ENCODE measurements at regions of chr18 and their contacts with region 1.

Region 1: DNA sequence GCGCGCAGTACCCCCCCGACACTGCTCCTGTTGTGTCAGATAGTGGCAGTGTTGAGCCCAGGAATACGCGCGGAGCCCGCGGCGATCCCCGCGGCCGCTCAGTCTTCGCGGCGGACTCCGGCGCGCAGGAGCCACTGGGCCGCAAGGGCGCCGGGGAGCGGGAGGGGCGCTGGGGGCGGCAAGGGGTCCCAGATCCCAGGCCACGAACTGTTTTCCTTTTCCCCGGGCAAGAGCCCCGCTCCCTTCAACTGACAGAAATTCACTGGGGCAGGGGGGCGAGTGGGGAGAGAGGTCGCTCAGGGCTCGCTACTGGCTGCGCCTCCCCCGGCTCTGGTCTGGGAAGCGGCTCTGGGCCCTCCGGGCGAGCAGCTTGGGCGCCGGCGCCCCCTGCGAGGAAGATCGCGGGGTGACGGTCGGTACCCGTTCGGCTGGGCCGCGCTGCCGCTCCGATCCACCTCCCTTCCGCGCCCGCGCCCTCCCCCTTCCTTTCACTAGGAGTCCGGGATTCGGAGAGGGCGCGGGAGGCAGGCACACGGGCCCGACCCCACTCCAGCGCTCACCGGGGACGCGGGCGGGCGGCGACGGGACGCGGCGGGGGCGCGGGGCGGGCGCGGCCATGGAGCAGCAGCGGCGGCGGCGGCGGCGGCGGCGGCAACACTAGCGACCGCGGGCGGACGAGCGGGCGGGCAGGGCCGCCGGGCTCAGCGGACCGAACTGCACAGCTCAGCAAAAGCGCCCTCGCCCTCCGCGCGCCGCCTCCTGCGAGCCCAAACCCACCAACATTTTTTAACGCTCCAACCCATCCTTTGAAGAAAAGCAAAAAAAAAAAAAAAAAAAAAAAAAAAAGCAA is 1.4 kb upstream of the SETBP1 start:
- DNase-seq: peak; percentile 84 to 87
- ATAC-seq: peak; percentile 75 to 79
- H3K4me3 ChIP-seq: peak overlapping the region; percentile 58 to 83 (median 79)
- H3K27ac ChIP-seq: peak overlapping the region; percentile 86 to 100 (median 96)
- H3K4me1 ChIP-seq: peaks cover 29 to 32% of the 10 kb centered on the region in 2 donors
- H3K27me3 ChIP-seq: no peaks in the 10 kb centered on the region
- CTCF ChIP-seq: peak; percentile 34 to 73 (median 70)
- POLR2A ChIP-seq: peak; percentile 89 to 91

Region 2: GRCh38 chr18:44601447-44601846 is 77.8 kb before region 1 on chr18:
- in situ Hi-C with region 1: no loop called
- intact Hi-C with region 1: no loop called
- DNase-seq: no peak
- ATAC-seq: no peak
- H3K4me3 ChIP-seq: no peak overlapping the region
- H3K27ac ChIP-seq: no peak overlapping the region
- H3K4me1 ChIP-seq: no peaks in the 10 kb centered on the region
- H3K27me3 ChIP-seq: no peaks in the 10 kb centered on the region
- CTCF ChIP-seq: no peak
- POLR2A ChIP-seq: no peak

Region 3: GRCh38 chr18:44733069-44733753 is 53.9 kb after region 1 on chr18:
- in situ Hi-C with region 1: no loop called
- intact Hi-C with region 1: loop called (anchors 2 kb)
- DNase-seq: peak in 1 of 2 donors; percentile 48
- ATAC-seq: peak; percentile 82 to 84
- H3K4me3 ChIP-seq: no peak overlapping the region
- H3K27ac ChIP-seq: peak overlapping the region; percentile 54 to 77 (median 72)
- H3K4me1 ChIP-seq: peaks cover 55 to 61% of the 10 kb centered on the region in 2 donors
- H3K27me3 ChIP-seq: no peaks in the 10 kb centered on the region
- CTCF ChIP-seq: no peak
- POLR2A ChIP-seq: peak; percentile 27 to 33

Region 4: DNA sequence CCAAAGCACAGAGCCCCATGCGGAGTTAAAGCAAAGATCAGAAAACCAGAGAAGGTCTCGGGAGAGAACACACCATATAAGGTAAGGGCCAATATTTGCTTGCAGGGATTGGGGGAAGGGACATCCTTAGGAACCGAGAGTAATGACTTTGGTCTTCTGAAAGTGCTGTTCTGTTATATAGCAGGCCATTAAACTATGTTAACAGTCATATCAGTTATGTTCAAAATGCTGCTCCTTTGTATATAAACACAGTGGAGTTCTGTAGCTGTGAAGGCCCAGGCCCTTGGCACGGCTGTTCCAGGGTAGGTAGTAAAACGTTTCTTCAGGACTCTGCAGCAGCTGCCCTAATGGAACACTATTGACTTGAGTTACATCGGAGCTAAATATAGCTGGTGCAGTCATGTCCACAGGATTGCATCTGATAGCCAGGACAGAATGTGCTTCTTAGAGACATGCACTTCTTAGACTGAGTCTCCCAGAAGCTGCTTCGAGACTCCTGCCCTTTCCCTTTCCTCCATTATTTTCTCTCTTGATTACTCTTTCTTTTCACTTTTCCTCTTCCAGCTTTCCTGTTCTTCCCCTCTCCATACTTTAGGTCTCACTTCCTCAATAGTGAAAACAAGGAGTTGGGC is 123.9 kb after region 1 on chr18:
- in situ Hi-C with region 1: loop called in 1 of 4 experiments (anchors 25 kb)
- intact Hi-C with region 1: loop called (anchors 2 kb)
- DNase-seq: peak; percentile 87 to 91
- ATAC-seq: peak; percentile 95 to 99
- H3K4me3 ChIP-seq: peak overlapping the region; percentile 15 to 27 (median 18)
- H3K27ac ChIP-seq: peak overlapping the region; percentile 92 to 98 (median 94)
- H3K4me1 ChIP-seq: peaks cover 73 to 86% of the 10 kb centered on the region in 2 donors
- H3K27me3 ChIP-seq: no peaks in the 10 kb centered on the region
- CTCF ChIP-seq: no peak
- POLR2A ChIP-seq: peak; percentile 74 to 86

Region 5: GRCh38 chr18:44895176-44895798 is 216.0 kb after region 1 on chr18:
- in situ Hi-C with region 1: loop called (anchors 5 to 10 kb)
- intact Hi-C with region 1: loop called (anchors 1 kb)
- DNase-seq: peak; percentile 32 to 69
- ATAC-seq: peak; percentile 85 to 97
- H3K4me3 ChIP-seq: no peak overlapping the region
- H3K27ac ChIP-seq: no peak overlapping the region
- H3K4me1 ChIP-seq: peaks cover 14 to 25% of the 10 kb centered on the region in 2 donors
- H3K27me3 ChIP-seq: no peaks in the 10 kb centered on the region
- CTCF ChIP-seq: peak; percentile 42 to 65 (median 54)
- POLR2A ChIP-seq: no peak

Region 6: GRCh38 chr18:45324495-45325113 is 645.3 kb after region 1 on chr18:
- in situ Hi-C with region 1: no loop called
- intact Hi-C with region 1: loop called (anchors 1 kb)
- DNase-seq: peak; percentile 88 to 97
- ATAC-seq: peak; percentile 75 to 77
- H3K4me3 ChIP-seq: peak overlapping the region; percentile 11 to 27 (median 20)
- H3K27ac ChIP-seq: peak overlapping the region; percentile 82 to 92 (median 90)
- H3K4me1 ChIP-seq: peaks cover 85% of the 10 kb centered on the region in 2 donors
- H3K27me3 ChIP-seq: no peaks in the 10 kb centered on the region
- CTCF ChIP-seq: peak in 1 of 5 experiments; percentile 12
- POLR2A ChIP-seq: peak in 1 of 2 donors; percentile 5